Mammary epithelial cell (primary cell): ENCODE measurements at regions of chr3 and their contacts with region 1.

Region 1: GRCh38 chr3:136196401-136197158 is 445 bp upstream of the MSL2 start:
- DNase-seq: peak; percentile 100
- H3K4me3 ChIP-seq: peak overlapping the region; percentile 39 to 93 (median 92)
- H3K27ac ChIP-seq: peak overlapping the region; percentile 76
- H3K4me1 ChIP-seq: peaks cover 13% of the 10 kb centered on the region
- H3K27me3 ChIP-seq: no peaks in the 10 kb centered on the region
- CTCF ChIP-seq: no peak

Region 2: GRCh38 chr3:136142592-136142991 is 54.0 kb before region 1 on chr3:
- CTCF ChIA-PET with region 1: no interaction called
- dilution Hi-C with region 1: loop called (anchors 5 kb)
- in situ Hi-C with region 1: no loop called
- intact Hi-C with region 1: loop called (anchors 1 kb)
- DNase-seq: peak; percentile 87
- H3K4me3 ChIP-seq: no peak overlapping the region
- H3K27ac ChIP-seq: peak overlapping the region; percentile 96
- H3K4me1 ChIP-seq: peaks cover 32% of the 10 kb centered on the region
- H3K27me3 ChIP-seq: no peaks in the 10 kb centered on the region
- CTCF ChIP-seq: no peak

Region 3: GRCh38 chr3:136152963-136153362 is 43.6 kb before region 1 on chr3:
- CTCF ChIA-PET with region 1: no interaction called
- dilution Hi-C with region 1: no loop called
- in situ Hi-C with region 1: no loop called
- intact Hi-C with region 1: no loop called
- DNase-seq: no peak
- H3K4me3 ChIP-seq: no peak overlapping the region
- H3K27ac ChIP-seq: peak overlapping the region; percentile 20
- H3K4me1 ChIP-seq: peaks cover 33% of the 10 kb centered on the region
- H3K27me3 ChIP-seq: no peaks in the 10 kb centered on the region
- CTCF ChIP-seq: no peak

Region 4: GRCh38 chr3:136171097-136171542 is 25.5 kb before region 1 on chr3:
- CTCF ChIA-PET with region 1: no interaction called
- dilution Hi-C with region 1: no loop called
- in situ Hi-C with region 1: no loop called
- intact Hi-C with region 1: loop called (anchors 2 kb)
- DNase-seq: peak; percentile 82
- H3K4me3 ChIP-seq: no peak overlapping the region
- H3K27ac ChIP-seq: peak overlapping the region; percentile 77
- H3K4me1 ChIP-seq: peaks cover 26% of the 10 kb centered on the region
- H3K27me3 ChIP-seq: no peaks in the 10 kb centered on the region
- CTCF ChIP-seq: no peak

Region 5: DNA sequence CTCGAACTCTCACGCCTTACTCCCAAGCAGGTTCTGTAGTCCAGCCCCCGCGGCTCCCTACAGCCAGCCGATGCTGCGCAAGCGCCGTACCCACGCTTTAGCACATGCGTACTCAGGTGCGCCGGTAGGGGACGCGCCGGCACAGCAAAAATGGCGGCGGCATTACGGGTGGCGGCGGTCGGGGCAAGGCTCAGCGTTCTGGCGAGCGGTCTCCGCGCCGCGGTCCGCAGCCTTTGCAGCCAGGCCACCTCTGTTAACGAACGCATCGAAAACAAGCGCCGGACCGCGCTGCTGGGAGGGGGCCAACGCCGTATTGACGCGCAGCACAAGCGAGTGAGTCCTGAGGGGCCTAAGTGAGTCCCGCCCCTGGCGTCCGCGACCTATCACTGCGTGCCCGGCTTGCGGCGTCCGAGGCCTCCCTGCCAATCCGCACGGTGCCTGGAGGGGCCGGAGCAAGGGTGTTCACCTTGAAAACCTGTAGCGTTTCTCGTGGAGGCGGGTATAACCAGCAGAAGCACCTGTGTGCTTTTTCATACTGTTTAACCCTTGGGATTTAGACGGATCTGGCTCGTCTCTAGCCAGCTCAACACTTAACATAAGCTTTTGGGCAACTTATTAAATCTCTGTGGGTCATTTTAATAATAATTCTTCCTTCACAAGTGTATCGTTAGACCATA is 53.8 kb after region 1 on chr3 and contains the start of gene PCCB:
- CTCF ChIA-PET with region 1: interaction called, 4 read pairs
- dilution Hi-C with region 1: loop called (anchors 5 kb)
- in situ Hi-C with region 1: no loop called
- intact Hi-C with region 1: loop called (anchors 1 kb)
- DNase-seq: peak; percentile 95
- H3K4me3 ChIP-seq: peak within 1 kb of the TSS; percentile 63 to 74 (median 71)
- H3K27ac ChIP-seq: peak within 1 kb of the TSS; percentile 39
- H3K4me1 ChIP-seq: peaks cover 13% of the 10 kb centered on the region
- H3K27me3 ChIP-seq: no peaks in the 10 kb centered on the region
- CTCF ChIP-seq: peak; percentile 40 to 89
- total RNA-seq, gene PCCB: 29.7 to 35.5 TPM

Region 6: DNA sequence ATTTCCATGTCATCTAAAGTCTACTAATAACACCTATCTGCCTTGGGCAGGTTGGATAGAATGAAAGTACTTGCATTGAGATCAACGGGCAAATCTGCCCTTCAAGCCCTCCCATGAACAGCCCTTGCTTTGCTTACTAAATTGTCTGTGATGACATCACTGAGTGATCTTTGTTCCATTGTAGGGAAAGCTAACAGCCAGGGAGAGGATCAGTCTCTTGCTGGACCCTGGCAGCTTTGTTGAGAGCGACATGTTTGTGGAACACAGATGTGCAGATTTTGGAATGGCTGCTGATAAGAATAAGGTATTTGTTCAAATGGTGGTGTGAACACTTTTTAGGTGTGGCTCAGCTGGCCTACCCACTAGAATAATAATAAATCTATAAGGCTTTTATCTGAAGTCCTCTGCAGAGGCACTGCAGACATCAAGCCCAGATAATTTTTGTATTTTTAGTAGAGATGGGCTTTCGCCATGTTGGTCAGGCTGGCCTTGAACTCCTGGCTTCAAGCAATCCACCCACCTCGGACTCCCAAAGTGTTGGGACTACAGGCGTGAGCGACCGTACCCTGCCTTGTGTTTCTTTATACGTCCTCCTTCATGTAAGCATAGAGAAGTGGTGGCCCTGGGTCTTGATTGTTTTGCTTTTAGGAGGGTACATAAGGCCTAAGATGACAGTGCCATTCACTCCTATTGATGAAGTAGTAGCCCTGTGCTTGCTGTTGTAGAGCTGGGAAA is 59.3 kb after region 1 on chr3:
- CTCF ChIA-PET with region 1: interaction called, 14 read pairs
- dilution Hi-C with region 1: loop called (anchors 5 kb)
- in situ Hi-C with region 1: no loop called
- intact Hi-C with region 1: no loop called
- DNase-seq: no peak
- H3K4me3 ChIP-seq: no peak overlapping the region
- H3K27ac ChIP-seq: no peak overlapping the region
- H3K4me1 ChIP-seq: peaks cover 8% of the 10 kb centered on the region
- H3K27me3 ChIP-seq: no peaks in the 10 kb centered on the region
- CTCF ChIP-seq: no peak

Region 7: DNA sequence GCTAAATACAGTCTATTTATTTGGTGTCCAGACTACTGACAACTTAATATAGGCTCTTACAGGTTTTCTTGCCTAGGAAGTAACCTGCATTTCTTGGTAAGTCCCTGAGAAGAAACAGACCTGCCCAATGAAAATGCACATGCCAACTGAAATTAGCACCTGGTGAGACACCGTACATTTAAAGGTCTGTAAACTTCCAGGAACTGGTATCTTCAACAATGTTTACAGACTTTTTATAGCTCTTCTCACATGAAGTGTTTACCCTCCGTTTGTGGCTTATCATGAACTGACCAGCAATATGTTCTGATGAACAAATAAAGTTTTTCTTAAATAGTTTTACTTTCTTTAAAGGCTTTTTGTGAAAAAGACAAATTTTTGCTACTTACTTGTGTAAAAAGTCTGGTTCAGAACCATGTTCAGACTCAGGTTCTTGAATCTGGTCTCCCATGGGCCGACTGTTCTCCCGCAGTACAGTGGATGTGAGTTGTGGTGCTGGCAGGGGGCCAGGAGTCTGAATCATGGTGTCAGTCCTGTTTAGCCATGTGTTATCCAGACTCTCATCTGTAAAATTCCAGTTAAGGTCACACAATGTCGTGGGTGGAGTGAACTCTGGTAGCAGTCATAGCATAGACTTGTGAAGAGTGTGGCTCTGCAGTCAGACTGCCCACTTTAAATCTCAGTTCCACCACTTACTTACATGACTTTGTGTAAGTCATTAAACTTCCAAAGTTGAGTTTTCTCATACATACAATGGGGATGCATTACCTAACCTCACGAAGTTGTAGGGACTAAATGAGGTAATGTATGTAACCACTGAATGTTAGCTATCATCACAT is 147.1 kb after region 1 on chr3:
- CTCF ChIA-PET with region 1: no interaction called
- dilution Hi-C with region 1: no loop called
- in situ Hi-C with region 1: no loop called
- intact Hi-C with region 1: loop called (anchors 10 kb)
- DNase-seq: peak; percentile 84
- H3K4me3 ChIP-seq: no peak overlapping the region
- H3K27ac ChIP-seq: no peak overlapping the region
- H3K4me1 ChIP-seq: peaks cover 11% of the 10 kb centered on the region
- H3K27me3 ChIP-seq: no peaks in the 10 kb centered on the region
- CTCF ChIP-seq: no peak